ENCODE measurements at regions of chr1 and their contacts with region 1.

Region 1: GRCh38 chr1:83931658-83932253 is 67.2 kb downstream of the TTLL7 start:
- DNase-seq: no peak
- H3K4me3 ChIP-seq: no peak overlapping the region
- H3K27me3 ChIP-seq: no peaks in the 10 kb centered on the region
- CTCF ChIP-seq: peak; percentile 70

Region 2: GRCh38 chr1:83882906-83883305 is 48.9 kb before region 1 on chr1:
- CTCF ChIA-PET with region 1: no interaction called
- POLR2A ChIA-PET with region 1: no interaction called
- DNase-seq: no peak
- H3K4me3 ChIP-seq: no peak overlapping the region
- H3K27me3 ChIP-seq: no peaks in the 10 kb centered on the region
- CTCF ChIP-seq: no peak

Region 3: GRCh38 chr1:83942914-83943313 is 11.2 kb after region 1 on chr1:
- CTCF ChIA-PET with region 1: interaction called, 10 read pairs
- POLR2A ChIA-PET with region 1: no interaction called
- DNase-seq: no peak
- H3K4me3 ChIP-seq: no peak overlapping the region
- H3K27me3 ChIP-seq: no peaks in the 10 kb centered on the region
- CTCF ChIP-seq: no peak

Region 4: GRCh38 chr1:84122780-84123382 is 191.1 kb after region 1 on chr1:
- CTCF ChIA-PET with region 1: interaction called, 72 read pairs
- POLR2A ChIA-PET with region 1: no interaction called
- DNase-seq: no peak
- H3K4me3 ChIP-seq: no peak overlapping the region
- H3K27me3 ChIP-seq: no peaks in the 10 kb centered on the region
- CTCF ChIP-seq: peak; percentile 65

Measured in BJ (cell line).